GM10248 (cell line): ENCODE measurements at regions of chr13 and their contacts with region 1.

Region 1: GRCh38 chr13:77136902-77137420 is 110.0 kb upstream of the FBXL3 start:
- DNase-seq: no peak
- CTCF ChIP-seq: no peak

Region 2: GRCh38 chr13:77150651-77151050 is 13.7 kb after region 1 on chr13:
- CTCF ChIA-PET with region 1: interaction called, 10 read pairs
- POLR2A ChIA-PET with region 1: no interaction called
- DNase-seq: no peak
- CTCF ChIP-seq: no peak